Activated CD4-positive, alpha-beta memory T cell treated with anti-CD3 and anti-CD28 coated beads for 36 hours (primary cell): ENCODE measurements at regions of chr3 and their contacts with region 1.

Region 1: DNA sequence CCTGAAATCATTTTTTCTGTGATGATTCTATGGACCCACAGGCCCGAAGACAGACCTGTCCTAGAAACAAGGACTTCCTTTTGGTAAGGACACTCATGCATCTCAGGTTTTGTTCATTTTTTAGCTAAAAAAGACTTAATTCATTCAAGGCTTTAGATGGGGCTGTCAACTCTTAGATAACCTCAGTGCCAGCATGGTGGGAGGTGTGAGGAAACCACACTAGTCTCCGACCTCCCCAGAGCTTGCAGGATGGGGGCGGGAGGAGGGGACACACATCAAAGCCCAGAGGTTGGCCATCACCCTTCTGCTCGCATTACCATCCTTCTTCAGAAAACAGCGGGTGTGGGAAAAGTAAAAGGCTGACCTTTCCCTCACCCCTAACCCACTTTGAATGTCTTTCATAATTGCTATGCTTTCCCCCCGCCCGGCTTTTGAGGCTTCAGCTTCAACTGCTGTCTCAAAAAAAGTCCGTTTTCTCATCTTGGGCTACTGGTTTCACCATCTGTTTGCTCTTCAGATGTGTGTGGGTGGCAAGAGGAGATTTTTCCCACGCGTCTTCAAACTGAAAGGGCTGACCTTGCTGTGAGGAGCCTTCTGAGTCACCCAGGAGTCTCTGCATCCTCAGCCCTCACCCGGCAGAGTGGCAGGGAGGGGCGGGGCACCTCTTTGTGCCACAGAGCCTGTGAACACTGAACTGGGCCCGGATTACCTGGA is 27.6 kb upstream of the CXCR6 start:
- DNase-seq: peak; percentile 91
- H3K4me3 Mint-ChIP-seq: peak overlapping the region; percentile 46
- H3K27ac Mint-ChIP-seq: peak overlapping the region; percentile 61
- H3K4me1 Mint-ChIP-seq: peaks cover 44% of the 10 kb centered on the region
- H3K27me3 Mint-ChIP-seq: peaks cover 19% of the 10 kb centered on the region

Region 2: DNA sequence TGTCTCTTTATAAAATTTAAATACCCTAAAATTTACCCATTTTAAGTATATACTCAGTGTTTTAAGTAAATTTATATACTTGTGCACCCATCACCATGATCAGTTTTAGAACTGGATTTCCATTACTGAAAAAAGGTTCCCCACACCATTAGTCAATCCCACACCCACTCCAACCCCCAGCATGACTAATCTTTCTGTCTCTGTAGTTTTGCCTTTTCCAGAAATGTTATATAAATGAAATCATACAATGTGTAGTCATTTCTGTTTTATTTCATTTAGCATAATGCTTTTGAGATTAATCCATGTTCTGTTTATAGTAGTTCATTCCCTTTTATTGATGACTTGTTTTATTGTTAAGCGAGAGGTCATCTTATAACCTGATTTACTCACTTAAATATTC is 387.2 kb before region 1 on chr3:
- CTCF ChIA-PET with region 1: no interaction called
- POLR2A ChIA-PET with region 1: no interaction called
- intact Hi-C with region 1: loop called (anchors 5 kb)
- DNase-seq: peak; percentile 68
- H3K4me3 Mint-ChIP-seq: no peak overlapping the region
- H3K27ac Mint-ChIP-seq: no peak overlapping the region
- H3K4me1 Mint-ChIP-seq: peaks cover 16% of the 10 kb centered on the region
- H3K27me3 Mint-ChIP-seq: no peaks in the 10 kb centered on the region

Region 3: GRCh38 chr3:45665101-45665572 is 250.5 kb before region 1 on chr3:
- CTCF ChIA-PET with region 1: interaction called, 4 read pairs
- POLR2A ChIA-PET with region 1: no interaction called
- intact Hi-C with region 1: loop called (anchors 5 kb)
- DNase-seq: peak; percentile 80
- H3K4me3 Mint-ChIP-seq: peak overlapping the region; percentile 76
- H3K27ac Mint-ChIP-seq: peak overlapping the region; percentile 83
- H3K4me1 Mint-ChIP-seq: peaks cover 51% of the 10 kb centered on the region
- H3K27me3 Mint-ChIP-seq: no peaks in the 10 kb centered on the region

Region 4: DNA sequence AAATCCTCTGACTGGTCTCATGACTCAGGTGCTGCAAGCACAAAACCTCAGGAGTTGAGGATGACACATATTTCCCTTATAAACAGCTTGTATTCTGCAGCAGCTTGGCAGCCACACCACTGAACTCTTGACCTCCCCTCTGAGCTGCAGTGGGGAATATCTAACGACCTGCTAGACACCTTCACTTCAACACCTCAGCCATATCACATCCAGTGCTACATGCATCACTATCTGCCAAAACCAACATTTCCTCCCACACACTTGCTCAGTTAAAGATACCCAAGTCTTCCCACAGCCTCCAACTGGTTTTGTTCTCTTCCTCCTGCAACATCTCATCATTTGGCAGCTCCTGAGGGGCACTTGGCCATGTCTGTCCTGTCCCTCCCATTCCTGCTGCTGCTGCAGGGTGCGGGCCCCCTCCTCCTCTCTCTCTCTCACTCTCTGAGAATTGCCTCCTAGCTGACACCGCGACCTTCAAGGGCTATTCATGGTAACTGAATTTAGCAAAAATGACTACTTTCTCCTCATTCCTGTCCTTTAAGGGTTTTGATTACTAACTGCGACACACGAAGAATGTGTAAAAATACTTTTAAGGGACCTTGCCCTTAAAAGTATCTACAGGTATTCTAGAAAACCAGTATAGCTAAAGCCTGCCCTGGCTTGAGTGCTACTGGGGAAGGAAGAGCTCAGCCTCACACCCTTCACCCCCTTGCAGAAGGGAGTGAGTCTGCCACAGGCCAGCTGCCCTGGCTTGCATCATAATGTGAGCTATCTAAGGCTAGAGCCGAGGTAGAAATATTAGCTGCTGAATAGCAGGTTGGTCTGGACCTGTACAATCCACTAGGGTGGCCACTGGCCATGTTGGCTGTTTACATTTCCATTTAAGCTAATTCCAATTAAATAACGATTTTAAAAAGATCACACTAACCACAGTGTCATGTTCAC is 34.3 kb before region 1 on chr3:
- CTCF ChIA-PET with region 1: no interaction called
- POLR2A ChIA-PET with region 1: no interaction called
- intact Hi-C with region 1: loop called (anchors 1 kb)
- DNase-seq: peak; percentile 67
- H3K4me3 Mint-ChIP-seq: no peak overlapping the region
- H3K27ac Mint-ChIP-seq: no peak overlapping the region
- H3K4me1 Mint-ChIP-seq: peaks cover 31% of the 10 kb centered on the region
- H3K27me3 Mint-ChIP-seq: peaks cover 24% of the 10 kb centered on the region